Psoas muscle (tissue), 8 donors: ENCODE measurements at regions of chr17 and their contacts with region 1.

Region 1: DNA sequence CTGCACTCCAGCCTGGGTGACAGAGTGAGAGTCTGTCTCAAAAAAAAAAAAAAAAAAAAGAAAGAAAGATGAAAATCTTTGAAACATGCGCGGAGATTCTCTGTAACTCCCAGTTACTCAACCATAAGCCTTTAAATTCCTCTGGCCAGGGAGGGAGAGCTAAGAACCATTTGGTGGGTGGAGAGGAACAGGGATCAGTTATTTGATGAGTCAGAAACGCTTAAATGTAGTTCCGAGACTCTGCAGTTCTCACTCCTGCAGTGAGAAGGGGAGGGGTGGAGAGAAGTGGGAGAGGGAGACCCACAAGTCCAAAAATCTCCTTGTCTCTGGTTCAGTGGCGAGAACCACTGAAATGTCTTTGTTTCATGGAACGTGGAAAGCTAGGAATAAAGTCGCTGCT is 266.7 kb downstream of the SOX9 start:
- DNase-seq: no peak
- ATAC-seq: no peak
- H3K4me3 ChIP-seq: no peak overlapping the region
- H3K27ac ChIP-seq: no peak overlapping the region
- H3K4me1 ChIP-seq: no peaks in the 10 kb centered on the region
- H3K27me3 ChIP-seq: no peaks in the 10 kb centered on the region
- CTCF ChIP-seq: no peak

Region 2: DNA sequence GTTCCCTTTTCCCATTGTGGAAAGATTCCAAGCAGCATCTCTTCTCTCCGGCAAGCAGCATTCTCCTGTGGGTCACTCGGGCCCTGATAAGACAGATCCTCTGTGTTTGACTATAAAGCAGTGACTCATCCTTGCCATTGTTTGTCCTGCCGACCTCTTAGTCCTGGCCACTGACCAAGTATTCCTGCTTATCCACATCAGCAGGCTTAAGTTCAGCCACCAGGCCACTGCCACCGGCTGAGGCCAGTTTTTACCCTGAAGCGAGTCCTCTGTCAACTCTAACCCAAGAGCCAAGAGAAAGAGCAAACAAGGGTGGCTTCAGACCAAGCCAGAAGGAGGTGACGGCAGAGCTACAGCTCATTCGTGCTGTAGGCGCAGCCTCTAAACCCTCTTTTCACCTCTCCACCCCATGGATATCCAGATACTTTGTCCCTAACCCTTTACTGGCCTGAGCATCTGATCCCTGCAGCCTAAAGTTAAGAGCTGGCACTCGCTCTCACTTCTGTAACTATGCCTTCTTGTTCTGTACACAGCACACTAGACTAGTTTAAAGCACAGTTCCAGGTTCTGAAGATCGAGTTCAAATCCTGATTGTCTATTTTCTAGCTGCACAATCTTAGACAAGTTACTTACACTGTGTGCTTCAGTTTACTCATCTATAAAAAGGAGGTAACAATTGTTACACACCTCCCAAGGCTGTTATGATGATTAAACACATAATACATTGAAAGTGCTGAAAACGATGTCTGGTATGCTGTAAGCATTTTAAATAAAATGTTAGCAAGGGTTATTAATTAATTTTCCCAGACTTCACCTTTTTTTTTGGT is 235.7 kb before region 1 on chr17:
- intact Hi-C with region 1: no loop called
- DNase-seq: peak; percentile 19 to 59
- ATAC-seq: peak; percentile 52 to 89 (median 79)
- H3K4me3 ChIP-seq: no peak overlapping the region
- H3K27ac ChIP-seq: no peak overlapping the region
- H3K4me1 ChIP-seq: no peaks in the 10 kb centered on the region
- H3K27me3 ChIP-seq: peaks cover 0 to 3% (median 0%) of the 10 kb centered on the region in 3 donors
- CTCF ChIP-seq: no peak

Region 3: DNA sequence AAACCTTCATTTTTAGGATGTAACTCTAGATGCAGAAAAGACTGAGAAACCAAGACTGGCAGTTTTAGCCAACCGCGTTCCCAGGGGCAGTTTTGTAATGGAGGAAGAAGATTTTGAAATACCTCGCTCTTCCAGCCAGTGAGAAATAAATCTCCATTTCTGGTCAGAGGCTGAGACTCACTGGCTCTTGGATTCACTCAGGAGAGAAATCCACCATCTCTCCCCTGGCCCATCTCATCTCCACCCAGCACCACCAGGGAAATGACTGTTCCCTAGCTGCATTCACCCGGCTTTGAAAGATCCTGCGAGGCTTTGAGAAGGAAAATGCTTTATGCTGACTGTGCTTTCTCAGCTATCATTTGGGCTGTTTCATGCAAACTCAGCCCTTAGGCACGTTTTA is 81.5 kb before region 1 on chr17:
- intact Hi-C with region 1: no loop called
- DNase-seq: peak; percentile 59 to 74
- ATAC-seq: peak in 2 of 4 donors; percentile 37 to 44
- H3K4me3 ChIP-seq: no peak overlapping the region
- H3K27ac ChIP-seq: no peak overlapping the region
- H3K4me1 ChIP-seq: no peaks in the 10 kb centered on the region
- H3K27me3 ChIP-seq: peaks cover 0 to 11% (median 2%) of the 10 kb centered on the region in 3 donors
- CTCF ChIP-seq: no peak

Region 4: GRCh38 chr17:72407336-72407909 is 19.9 kb after region 1 on chr17:
- intact Hi-C with region 1: loop called in 1 of 2 experiments (anchors 2 kb)
- DNase-seq: peak in 1 of 2 donors; percentile 64
- ATAC-seq: peak in 3 of 4 donors; percentile 29 to 60 (median 53)
- H3K4me3 ChIP-seq: no peak overlapping the region
- H3K27ac ChIP-seq: no peak overlapping the region
- H3K4me1 ChIP-seq: no peaks in the 10 kb centered on the region
- H3K27me3 ChIP-seq: no peaks in the 10 kb centered on the region
- CTCF ChIP-seq: no peak